Activated CD4-positive, alpha-beta memory T cell treated with anti-CD3 and anti-CD28 coated beads for 36 hours (primary cell): ENCODE measurements at regions of chrX and their contacts with region 1.

Region 1: DNA sequence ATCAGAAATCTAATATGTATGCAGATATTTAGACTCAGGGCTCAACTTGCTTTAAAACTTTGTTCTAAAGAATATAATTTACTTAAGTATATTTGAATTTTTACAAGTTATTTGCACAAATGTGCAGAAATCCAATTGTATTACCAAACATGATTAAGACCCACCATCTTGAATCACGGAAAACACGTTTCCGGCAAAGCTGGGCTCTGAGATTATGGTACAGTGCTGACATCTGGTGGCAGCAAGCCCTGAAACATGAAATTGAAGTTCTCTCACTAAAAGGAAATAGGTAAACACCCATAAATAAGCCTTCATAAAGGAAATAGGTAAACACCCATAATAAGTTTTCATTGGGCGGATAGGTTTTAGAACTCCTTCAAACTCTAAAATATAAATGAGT is 98.3 kb upstream of the MAOA start:
- DNase-seq: peak; percentile 66
- H3K4me3 Mint-ChIP-seq: no peak overlapping the region
- H3K27ac Mint-ChIP-seq: no peak overlapping the region
- H3K4me1 Mint-ChIP-seq: no peaks in the 10 kb centered on the region
- H3K27me3 Mint-ChIP-seq: no peaks in the 10 kb centered on the region

Region 2: GRCh38 chrX:41781502-41781901 is 1776.3 kb before region 1 on chrX:
- CTCF ChIA-PET with region 1: interaction called, 5 read pairs
- POLR2A ChIA-PET with region 1: no interaction called
- intact Hi-C with region 1: loop called (anchors 5 kb)
- DNase-seq: no peak
- H3K4me3 Mint-ChIP-seq: no peak overlapping the region
- H3K27ac Mint-ChIP-seq: no peak overlapping the region
- H3K4me1 Mint-ChIP-seq: peaks cover 25% of the 10 kb centered on the region
- H3K27me3 Mint-ChIP-seq: no peaks in the 10 kb centered on the region

Region 3: GRCh38 chrX:43349363-43349762 is 208.4 kb before region 1 on chrX:
- CTCF ChIA-PET with region 1: interaction called, 22 read pairs
- POLR2A ChIA-PET with region 1: no interaction called
- intact Hi-C with region 1: loop called (anchors 5 kb)
- DNase-seq: peak; percentile 44
- H3K4me3 Mint-ChIP-seq: no peak overlapping the region
- H3K27ac Mint-ChIP-seq: no peak overlapping the region
- H3K4me1 Mint-ChIP-seq: peaks cover 6% of the 10 kb centered on the region
- H3K27me3 Mint-ChIP-seq: no peaks in the 10 kb centered on the region

Region 4: DNA sequence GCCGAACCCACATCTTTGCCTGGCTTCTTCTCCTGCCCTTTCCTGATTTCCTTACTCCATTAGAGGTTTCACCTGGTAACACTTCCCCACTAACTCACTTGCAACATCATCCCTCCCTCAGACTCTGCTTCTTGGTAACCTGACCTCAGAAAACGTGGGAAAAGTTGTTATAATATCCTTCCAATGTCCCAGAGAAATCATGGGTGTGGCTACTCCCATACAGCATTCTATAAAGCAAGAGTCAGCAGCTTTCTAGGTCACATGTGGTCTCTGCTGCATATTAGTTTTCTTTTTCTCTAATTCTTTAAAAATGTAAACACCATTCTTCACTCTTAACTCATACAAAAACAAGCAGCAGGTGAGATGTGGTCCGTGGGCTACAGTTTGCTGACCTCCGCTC is 184.8 kb before region 1 on chrX:
- CTCF ChIA-PET with region 1: no interaction called
- POLR2A ChIA-PET with region 1: no interaction called
- intact Hi-C with region 1: no loop called
- DNase-seq: no peak
- H3K4me3 Mint-ChIP-seq: no peak overlapping the region
- H3K27ac Mint-ChIP-seq: no peak overlapping the region
- H3K4me1 Mint-ChIP-seq: no peaks in the 10 kb centered on the region
- H3K27me3 Mint-ChIP-seq: no peaks in the 10 kb centered on the region

Region 5: DNA sequence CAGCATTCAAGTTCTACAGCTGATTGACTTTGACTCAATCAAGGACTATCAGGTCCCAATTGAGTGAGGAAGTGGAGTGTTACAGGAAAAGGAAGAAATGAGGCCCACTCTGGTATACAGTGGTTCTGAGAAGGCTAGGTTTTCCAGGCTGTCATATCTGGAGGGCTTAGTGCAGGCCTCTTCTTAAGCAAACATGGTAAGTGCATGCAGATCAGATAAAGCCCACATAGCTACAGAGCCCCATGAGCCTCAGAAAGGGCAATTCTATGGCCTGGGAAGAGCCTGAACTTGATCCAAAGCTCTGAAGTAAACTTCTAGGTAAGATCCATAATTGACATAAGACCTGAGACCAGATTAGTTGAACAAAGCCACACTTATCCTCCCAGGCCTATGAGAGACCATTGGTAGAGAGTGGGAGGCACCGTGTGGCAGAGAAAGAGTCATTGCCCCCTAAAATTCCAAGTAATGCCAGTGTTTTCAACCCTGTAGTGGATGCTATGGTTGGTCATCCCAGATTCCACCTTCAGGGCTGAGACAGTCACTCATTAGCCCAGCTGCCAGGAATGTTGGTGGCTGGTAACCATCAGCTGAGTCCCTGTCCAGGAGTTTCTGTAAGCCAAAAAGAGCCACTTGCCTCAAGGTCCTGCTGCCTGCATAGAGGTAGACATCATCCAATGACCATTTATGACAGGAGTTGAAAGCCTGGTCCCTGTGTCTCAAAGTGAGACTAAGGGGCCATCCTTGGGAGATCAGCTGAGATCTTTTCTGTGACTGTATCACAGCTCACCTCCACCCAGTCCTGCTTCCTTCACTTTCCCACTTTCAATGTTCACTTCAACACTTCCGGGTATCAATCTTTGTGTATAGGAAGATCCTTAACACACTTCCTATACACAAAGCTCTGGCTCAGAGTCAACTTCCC is 69.6 kb after region 1 on chrX:
- CTCF ChIA-PET with region 1: no interaction called
- POLR2A ChIA-PET with region 1: no interaction called
- intact Hi-C with region 1: no loop called
- DNase-seq: peak; percentile 12
- H3K4me3 Mint-ChIP-seq: no peak overlapping the region
- H3K27ac Mint-ChIP-seq: peak overlapping the region; percentile 81
- H3K4me1 Mint-ChIP-seq: peaks cover 28% of the 10 kb centered on the region
- H3K27me3 Mint-ChIP-seq: peaks cover 1% of the 10 kb centered on the region

Region 6: GRCh38 chrX:43750248-43750676 is 192.5 kb after region 1 on chrX:
- CTCF ChIA-PET with region 1: interaction called, 34 read pairs
- POLR2A ChIA-PET with region 1: no interaction called
- intact Hi-C with region 1: loop called (anchors 1 kb)
- DNase-seq: peak; percentile 48
- H3K4me3 Mint-ChIP-seq: no peak overlapping the region
- H3K27ac Mint-ChIP-seq: no peak overlapping the region
- H3K4me1 Mint-ChIP-seq: peaks cover 7% of the 10 kb centered on the region
- H3K27me3 Mint-ChIP-seq: no peaks in the 10 kb centered on the region